Naive thymus-derived CD4-positive, alpha-beta T cell (primary cell): ENCODE measurements at regions of chr21 and their contacts with region 1.

Region 1: GRCh38 chr21:35400233-35400957 is 351.3 kb upstream of the RUNX1 start:
- DNase-seq: peak in 8 of 9 donors; percentile 23 to 73 (median 63)
- ATAC-seq: peak; percentile 88
- H3K4me3 ChIP-seq: no peak overlapping the region
- H3K4me3 Mint-ChIP-seq: peak overlapping the region in 3 of 10 donors; percentile 0 to 9 (median 1)
- H3K27ac ChIP-seq: no peak overlapping the region
- H3K27ac Mint-ChIP-seq: peak overlapping the region in 1 of 9 donors; percentile 65
- H3K4me1 ChIP-seq: no peaks in the 10 kb centered on the region
- H3K4me1 Mint-ChIP-seq: peaks cover 7 to 21% (median 15%) of the 10 kb centered on the region in 7 donors
- H3K27me3 ChIP-seq: no peaks in the 10 kb centered on the region
- H3K27me3 Mint-ChIP-seq: peaks cover 0 to 4% (median 0%) of the 10 kb centered on the region in 5 donors

Region 2: GRCh38 chr21:34722684-34723300 is 677.6 kb before region 1 on chr21:
- CTCF ChIA-PET with region 1: interaction called, 6 read pairs
- POLR2A ChIA-PET with region 1: no interaction called
- intact Hi-C with region 1: loop called in 1 of 2 experiments (anchors 1 kb)
- DNase-seq: peak in 4 of 9 donors; percentile 8 to 38 (median 22)
- ATAC-seq: no peak
- H3K4me3 ChIP-seq: no peak overlapping the region
- H3K4me3 Mint-ChIP-seq: no peak overlapping the region
- H3K27ac ChIP-seq: no peak overlapping the region
- H3K27ac Mint-ChIP-seq: no peak overlapping the region
- H3K4me1 ChIP-seq: no peaks in the 10 kb centered on the region
- H3K4me1 Mint-ChIP-seq: peaks cover 0 to 9% (median 0%) of the 10 kb centered on the region in 7 donors
- H3K27me3 ChIP-seq: no peaks in the 10 kb centered on the region
- H3K27me3 Mint-ChIP-seq: peaks cover 4 to 16% (median 10%) of the 10 kb centered on the region in 5 donors

Region 3: DNA sequence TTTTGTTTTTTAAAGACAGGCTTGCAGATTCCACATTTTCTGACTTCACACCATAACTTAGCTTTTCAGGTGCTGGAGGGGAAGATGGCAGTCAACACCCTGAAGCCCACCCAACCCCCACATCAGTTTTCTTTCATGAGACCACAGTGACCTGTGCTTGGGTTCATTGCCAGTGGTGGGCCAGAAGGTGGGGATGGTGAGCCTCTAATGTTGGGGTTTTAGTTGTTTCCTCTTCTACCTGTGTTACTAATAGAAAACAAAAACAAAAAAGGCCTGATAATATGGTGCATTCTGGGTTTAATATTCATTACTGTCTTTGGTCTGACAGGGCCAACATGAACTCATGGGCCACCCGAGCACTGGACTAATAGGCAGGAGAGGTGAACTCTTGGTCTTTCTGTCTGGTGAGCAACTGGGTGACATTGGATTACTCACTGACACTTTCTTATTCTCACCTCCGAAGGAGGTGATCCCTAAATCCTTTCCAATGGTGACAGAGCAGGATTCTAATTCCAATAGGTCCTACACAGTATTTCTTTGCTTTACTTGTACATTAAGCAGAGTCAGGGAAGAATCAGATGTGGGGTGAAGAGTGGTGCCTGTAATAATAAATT is 598.8 kb before region 1 on chr21:
- CTCF ChIA-PET with region 1: interaction called, 3 read pairs
- POLR2A ChIA-PET with region 1: no interaction called
- intact Hi-C with region 1: loop called (anchors 1 kb)
- DNase-seq: no peak
- ATAC-seq: peak; percentile 48
- H3K4me3 ChIP-seq: no peak overlapping the region
- H3K4me3 Mint-ChIP-seq: no peak overlapping the region
- H3K27ac ChIP-seq: no peak overlapping the region
- H3K27ac Mint-ChIP-seq: peak overlapping the region in 8 of 9 donors; percentile 22 to 84 (median 68)
- H3K4me1 ChIP-seq: no peaks in the 10 kb centered on the region
- H3K4me1 Mint-ChIP-seq: peaks cover 18 to 44% (median 32%) of the 10 kb centered on the region in 7 donors
- H3K27me3 ChIP-seq: no peaks in the 10 kb centered on the region
- H3K27me3 Mint-ChIP-seq: no peaks in the 10 kb centered on the region

Region 4: GRCh38 chr21:35204850-35205541 is 195.4 kb before region 1 on chr21:
- CTCF ChIA-PET with region 1: no interaction called
- POLR2A ChIA-PET with region 1: no interaction called
- intact Hi-C with region 1: loop called in 1 of 2 experiments (anchors 1 kb)
- DNase-seq: peak in 4 of 9 donors; percentile 7 to 13 (median 9)
- ATAC-seq: peak; percentile 24
- H3K4me3 ChIP-seq: peak overlapping the region; percentile 41
- H3K4me3 Mint-ChIP-seq: peak overlapping the region; percentile 72 to 93 (median 87)
- H3K27ac ChIP-seq: peak overlapping the region; percentile 29
- H3K27ac Mint-ChIP-seq: peak overlapping the region; percentile 8 to 83 (median 57)
- H3K4me1 ChIP-seq: peaks cover 0 to 10% of the 10 kb centered on the region in 2 donors
- H3K4me1 Mint-ChIP-seq: peaks cover 18 to 29% (median 26%) of the 10 kb centered on the region in 7 donors
- H3K27me3 ChIP-seq: no peaks in the 10 kb centered on the region
- H3K27me3 Mint-ChIP-seq: peaks cover 0 to 2% (median 0%) of the 10 kb centered on the region in 5 donors

Region 5: GRCh38 chr21:35616090-35616489 is 215.7 kb after region 1 on chr21:
- CTCF ChIA-PET with region 1: interaction called, 14 read pairs
- POLR2A ChIA-PET with region 1: no interaction called
- intact Hi-C with region 1: loop called in 1 of 2 experiments (anchors 1 kb)
- DNase-seq: peak in 6 of 9 donors; percentile 2 to 44 (median 28)
- ATAC-seq: no peak
- H3K4me3 ChIP-seq: no peak overlapping the region
- H3K4me3 Mint-ChIP-seq: no peak overlapping the region
- H3K27ac ChIP-seq: no peak overlapping the region
- H3K27ac Mint-ChIP-seq: no peak overlapping the region
- H3K4me1 ChIP-seq: no peaks in the 10 kb centered on the region
- H3K4me1 Mint-ChIP-seq: peaks cover 0 to 6% (median 3%) of the 10 kb centered on the region in 7 donors
- H3K27me3 ChIP-seq: no peaks in the 10 kb centered on the region
- H3K27me3 Mint-ChIP-seq: peaks cover 0 to 11% (median 0%) of the 10 kb centered on the region in 5 donors

Region 6: DNA sequence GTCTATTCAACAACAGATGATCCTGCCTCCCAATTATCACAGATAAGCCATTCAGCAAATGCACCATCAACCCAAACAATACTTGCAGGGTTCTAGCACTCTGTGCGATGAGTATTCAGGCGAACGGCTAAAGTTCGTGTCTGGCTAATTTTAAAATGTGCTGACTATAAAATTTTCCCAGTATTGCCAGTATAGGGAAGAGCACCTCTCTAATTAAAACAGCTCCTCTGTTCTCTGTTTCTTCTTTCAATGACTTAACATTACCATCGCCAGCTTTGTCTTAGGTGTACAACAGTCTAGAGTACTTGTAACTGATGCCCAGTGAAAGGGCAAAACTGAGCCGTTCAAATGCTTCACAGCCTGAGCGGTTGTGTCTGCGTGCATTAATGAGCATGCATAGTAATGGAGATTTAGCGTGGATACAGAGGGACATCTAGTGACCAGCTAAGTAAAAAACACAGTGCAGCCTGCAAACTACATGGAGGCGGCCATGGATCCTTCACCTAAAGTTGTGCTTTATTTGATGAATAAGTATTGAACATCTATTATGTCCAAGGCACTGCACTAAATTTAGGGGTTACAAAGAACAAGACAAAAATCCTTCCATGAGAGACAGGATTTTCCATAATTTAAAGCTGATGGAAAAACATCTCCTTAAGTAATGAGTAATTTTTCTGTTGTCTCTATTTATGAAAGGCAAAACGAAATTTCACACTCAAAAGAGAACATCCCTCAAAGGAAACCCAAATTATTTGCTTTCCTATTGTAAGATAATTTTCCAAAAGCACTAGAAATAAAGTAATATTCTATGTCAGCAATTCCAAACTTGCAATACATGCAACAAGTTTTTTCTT is 539.9 kb after region 1 on chr21:
- CTCF ChIA-PET with region 1: no interaction called
- POLR2A ChIA-PET with region 1: no interaction called
- intact Hi-C with region 1: loop called in 1 of 2 experiments (anchors 1 kb)
- DNase-seq: no peak
- ATAC-seq: peak; percentile 57
- H3K4me3 ChIP-seq: no peak overlapping the region
- H3K4me3 Mint-ChIP-seq: no peak overlapping the region
- H3K27ac ChIP-seq: no peak overlapping the region
- H3K27ac Mint-ChIP-seq: no peak overlapping the region
- H3K4me1 ChIP-seq: no peaks in the 10 kb centered on the region
- H3K4me1 Mint-ChIP-seq: peaks cover 0 to 1% (median 0%) of the 10 kb centered on the region in 7 donors
- H3K27me3 ChIP-seq: no peaks in the 10 kb centered on the region
- H3K27me3 Mint-ChIP-seq: peaks cover 0 to 14% (median 8%) of the 10 kb centered on the region in 5 donors

Region 7: DNA sequence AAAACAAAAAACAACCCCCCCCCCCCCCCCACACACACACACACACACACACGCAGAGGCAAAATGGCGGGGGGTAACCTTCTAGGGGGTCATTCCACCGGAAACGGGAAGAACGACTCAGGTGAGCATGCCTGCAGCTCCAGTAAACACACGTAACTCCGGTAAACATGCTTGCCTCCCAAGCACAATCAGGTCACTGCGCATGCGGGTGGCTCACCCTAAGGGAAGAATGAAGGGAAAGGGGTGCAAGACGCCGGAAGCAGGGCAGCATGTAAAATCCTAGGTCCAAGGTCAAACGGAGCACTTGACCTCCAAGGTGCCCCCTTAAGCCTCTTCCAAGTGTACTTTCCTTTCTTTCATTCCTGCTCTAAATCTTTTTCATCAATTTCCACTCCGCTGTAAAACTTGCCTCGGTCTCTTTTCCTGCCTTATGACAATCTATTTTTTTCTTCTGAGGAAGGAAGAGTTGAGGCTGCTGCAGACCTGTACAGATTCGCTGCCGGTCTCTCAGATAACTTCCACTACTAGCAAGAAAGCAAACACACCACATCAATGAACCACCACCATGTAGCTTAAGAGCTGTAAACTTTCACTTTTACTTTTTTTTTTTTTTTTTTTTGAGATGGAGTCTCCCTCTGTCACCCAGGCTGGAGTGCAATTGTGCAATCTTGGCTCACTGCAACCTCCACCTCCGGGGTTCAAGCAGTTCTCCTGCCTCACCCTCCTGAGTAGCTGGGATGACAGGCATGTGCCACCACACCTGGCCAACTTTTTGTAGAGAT is 713.4 kb after region 1 on chr21:
- CTCF ChIA-PET with region 1: no interaction called
- POLR2A ChIA-PET with region 1: no interaction called
- intact Hi-C with region 1: loop called (anchors 1 to 10 kb)
- DNase-seq: peak in 8 of 9 donors; percentile 49 to 90 (median 74)
- ATAC-seq: peak; percentile 92
- H3K4me3 ChIP-seq: peak overlapping the region; percentile 64
- H3K4me3 Mint-ChIP-seq: peak overlapping the region; percentile 67 to 100 (median 88)
- H3K27ac ChIP-seq: peak overlapping the region; percentile 72
- H3K27ac Mint-ChIP-seq: peak overlapping the region; percentile 85 to 98 (median 92)
- H3K4me1 ChIP-seq: peaks cover 0 to 19% of the 10 kb centered on the region in 2 donors
- H3K4me1 Mint-ChIP-seq: peaks cover 16 to 45% (median 28%) of the 10 kb centered on the region in 7 donors
- H3K27me3 ChIP-seq: no peaks in the 10 kb centered on the region
- H3K27me3 Mint-ChIP-seq: peaks cover 0 to 10% (median 0%) of the 10 kb centered on the region in 5 donors